ENCODE measurements at regions of chr1 and their contacts with region 1.

Region 1: DNA sequence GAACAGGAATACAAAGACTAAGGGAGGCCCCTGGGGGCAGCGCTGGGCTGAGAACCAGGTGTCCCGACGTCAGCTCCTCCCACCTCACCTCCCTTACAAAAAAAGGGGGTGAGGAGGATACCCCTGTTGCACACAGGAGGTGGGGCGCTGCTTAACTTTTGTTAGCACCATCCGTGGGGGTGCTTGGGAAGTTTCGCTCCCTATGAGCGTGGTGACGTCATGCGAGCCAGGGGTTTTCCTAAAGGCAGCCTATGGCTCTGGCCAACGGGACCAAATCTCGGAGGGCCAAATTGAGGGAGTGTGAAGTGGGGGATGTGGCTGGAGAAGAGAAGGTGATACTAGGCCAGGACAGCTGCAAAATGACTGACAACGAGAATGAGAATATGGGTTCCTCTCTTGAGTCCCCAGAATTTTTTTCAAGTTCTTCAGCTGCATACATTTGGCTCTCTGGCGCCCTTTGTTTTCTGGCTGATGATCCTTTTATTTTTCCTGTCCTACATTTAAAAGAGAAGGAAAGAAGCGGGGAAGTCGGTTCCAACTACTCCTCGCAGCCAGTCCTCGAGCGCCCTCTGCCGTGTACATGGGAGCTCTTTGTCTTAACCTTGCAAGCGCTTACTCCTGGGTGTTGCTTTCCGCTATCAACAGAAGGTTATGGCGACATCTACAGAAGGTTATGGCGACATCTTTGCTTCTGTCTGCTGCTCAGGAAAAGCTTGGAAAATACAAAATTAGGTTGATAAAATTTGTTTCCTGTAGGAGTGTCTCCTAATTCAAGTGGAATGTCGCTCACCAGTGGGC is 48.0 kb upstream of the ZC3H11B start:
- DNase-seq: peak; percentile 54
- H3K4me3 ChIP-seq: no peak overlapping the region
- H3K27ac ChIP-seq: no peak overlapping the region
- H3K4me1 ChIP-seq: no peaks in the 10 kb centered on the region
- H3K27me3 ChIP-seq: no peaks in the 10 kb centered on the region
- CTCF ChIP-seq: peak; percentile 10 to 63 (median 55)
- POLR2A ChIP-seq: no peak

Region 2: DNA sequence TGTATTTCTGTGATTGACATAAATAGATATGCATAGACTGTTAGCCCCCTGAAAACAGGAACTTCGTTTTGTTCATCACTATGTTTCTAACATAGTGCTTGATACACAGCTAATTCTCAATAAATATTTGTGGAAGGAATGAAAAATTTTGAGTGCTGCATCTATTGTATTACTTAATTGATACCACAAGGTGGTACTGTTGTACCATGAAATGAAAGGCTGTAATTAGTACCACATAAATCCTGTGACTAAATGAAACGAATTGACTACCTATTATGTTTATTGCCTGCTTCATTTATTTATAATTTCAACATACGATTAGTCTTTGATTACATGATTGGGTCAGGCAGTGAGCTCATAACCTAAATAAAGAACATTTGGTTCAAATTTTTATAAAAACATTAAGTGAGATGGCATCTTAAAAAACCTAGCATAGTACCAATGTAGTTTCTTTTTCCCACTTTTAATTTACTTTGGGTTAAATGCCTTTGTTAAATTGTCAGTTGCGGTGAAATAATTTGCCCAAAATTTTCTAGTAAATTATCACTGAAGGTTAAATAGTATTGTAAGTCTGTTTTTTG is 1330.7 kb before region 1 on chr1:
- intact Hi-C with region 1: loop called (anchors 5 kb)
- DNase-seq: no peak
- H3K4me3 ChIP-seq: no peak overlapping the region
- H3K27ac ChIP-seq: no peak overlapping the region
- H3K4me1 ChIP-seq: no peaks in the 10 kb centered on the region
- H3K27me3 ChIP-seq: no peaks in the 10 kb centered on the region
- CTCF ChIP-seq: peak; percentile 31 to 84 (median 76)
- POLR2A ChIP-seq: no peak

Region 3: DNA sequence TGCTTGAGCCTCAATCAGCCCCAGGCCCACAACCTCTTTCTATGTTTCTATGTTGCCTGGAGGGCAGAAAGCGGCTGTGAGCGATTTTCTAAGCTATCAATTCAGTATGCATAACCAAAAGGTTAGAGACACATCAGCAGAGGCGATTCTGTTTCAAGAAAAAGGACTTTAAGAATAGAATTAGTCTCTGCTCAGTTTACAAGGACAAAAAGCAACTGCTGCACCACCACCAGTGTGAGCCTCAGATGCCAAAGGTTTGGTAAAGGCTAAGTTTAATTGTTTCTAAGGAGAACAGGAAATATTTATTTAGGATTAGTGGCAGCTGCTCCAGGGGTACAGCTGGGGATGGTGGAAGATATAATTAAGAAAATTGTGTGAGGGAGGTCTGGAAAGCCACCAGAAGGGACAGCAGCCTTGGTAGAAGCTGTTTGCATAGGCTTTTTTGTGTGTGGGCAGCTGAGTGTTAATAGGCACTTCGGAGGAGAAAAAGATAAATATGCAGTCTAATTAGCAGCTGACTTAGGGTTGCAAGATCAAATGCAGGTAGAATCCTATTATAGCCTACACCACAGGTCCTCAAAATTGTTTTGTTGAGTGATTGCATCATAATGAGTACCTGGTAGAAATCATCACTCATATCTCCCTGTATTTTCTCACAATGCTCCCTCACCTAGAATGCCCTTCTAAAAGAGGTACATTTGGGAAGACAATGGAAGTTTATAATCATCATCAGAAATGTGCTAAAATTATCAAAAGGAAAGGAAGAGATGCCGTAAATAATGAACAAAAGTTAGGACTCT is 83.7 kb before region 1 on chr1:
- intact Hi-C with region 1: loop called (anchors 10 kb)
- DNase-seq: no peak
- H3K4me3 ChIP-seq: no peak overlapping the region
- H3K27ac ChIP-seq: no peak overlapping the region
- H3K4me1 ChIP-seq: no peaks in the 10 kb centered on the region
- H3K27me3 ChIP-seq: no peaks in the 10 kb centered on the region
- CTCF ChIP-seq: no peak
- POLR2A ChIP-seq: no peak

Region 4: GRCh38 chr1:219812491-219813203 is 151.8 kb after region 1 on chr1:
- intact Hi-C with region 1: loop called (anchors 10 kb)
- DNase-seq: peak; percentile 13
- H3K4me3 ChIP-seq: no peak overlapping the region
- H3K27ac ChIP-seq: no peak overlapping the region
- H3K4me1 ChIP-seq: no peaks in the 10 kb centered on the region
- H3K27me3 ChIP-seq: no peaks in the 10 kb centered on the region
- CTCF ChIP-seq: peak; percentile 42 to 80 (median 68)
- POLR2A ChIP-seq: no peak

Measured in prostate gland (tissue), 2 donors.